ENCODE measurements at regions of chr5 and their contacts with region 1.

Region 1: GRCh38 chr5:135376961-135377624 is 21.9 kb downstream of the MACROH2A1 start:
- DNase-seq: no peak
- H3K4me3 ChIP-seq: no peak overlapping the region
- H3K27ac ChIP-seq: no peak overlapping the region
- H3K4me1 ChIP-seq: peaks cover 8 to 63% (median 25%) of the 10 kb centered on the region in 4 donors
- H3K27me3 ChIP-seq: no peaks in the 10 kb centered on the region
- CTCF ChIP-seq: no peak
- EP300 ChIP-seq: no peak
- POLR2A ChIP-seq: no peak

Region 2: DNA sequence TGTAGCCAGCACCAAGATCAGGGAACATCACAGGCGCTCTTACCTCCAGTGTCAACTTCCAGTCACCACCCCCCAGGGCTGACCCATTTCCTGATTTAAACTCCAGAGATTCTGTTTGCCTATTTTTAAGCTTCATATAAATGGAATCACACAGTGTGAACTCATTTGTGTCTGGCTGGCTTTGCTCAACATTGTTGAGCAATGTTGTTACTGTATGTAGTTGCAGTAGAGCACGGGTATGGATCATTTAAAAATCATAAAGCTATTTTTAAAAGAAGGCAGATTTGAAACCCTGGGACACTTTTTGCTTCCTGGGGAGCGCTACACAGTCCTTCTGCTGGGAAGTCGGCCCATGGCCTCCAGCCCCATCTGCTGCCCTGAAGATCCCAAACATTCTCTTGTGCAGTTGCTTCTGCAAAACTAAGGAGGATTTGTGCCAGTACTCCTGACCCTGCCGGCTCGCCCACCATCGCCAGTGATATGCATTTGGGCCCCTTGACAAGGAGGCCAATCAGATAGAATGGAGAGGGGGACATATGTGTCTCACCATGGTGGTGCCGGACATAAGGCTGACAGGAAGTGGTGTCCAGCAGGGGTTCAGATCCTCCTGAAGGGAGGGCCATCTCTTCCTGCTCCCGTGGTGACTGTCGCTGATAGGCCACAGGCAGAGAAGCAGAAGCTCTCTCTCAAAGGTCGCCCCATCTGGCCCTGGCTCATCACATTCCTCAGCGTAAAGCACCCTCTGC is 56.8 kb after region 1 on chr5:
- in situ Hi-C with region 1: no loop called
- intact Hi-C with region 1: no loop called
- DNase-seq: no peak
- H3K4me3 ChIP-seq: no peak overlapping the region
- H3K27ac ChIP-seq: peak overlapping the region in 1 of 4 donors; percentile 17
- H3K4me1 ChIP-seq: peaks cover 0 to 18% (median 3%) of the 10 kb centered on the region in 4 donors
- H3K27me3 ChIP-seq: peaks cover 3% of the 10 kb centered on the region
- CTCF ChIP-seq: no peak
- EP300 ChIP-seq: no peak
- POLR2A ChIP-seq: no peak

Region 3: GRCh38 chr5:136132557-136133221 is 755.6 kb after region 1 on chr5 and contains the start of gene SMAD5:
- in situ Hi-C with region 1: no loop called
- intact Hi-C with region 1: loop called (anchors 5 kb)
- DNase-seq: peak; percentile 96
- H3K4me3 ChIP-seq: peak within 1 kb of the TSS; percentile 70 to 96 (median 76)
- H3K27ac ChIP-seq: peak within 1 kb of the TSS; percentile 98 to 100 (median 98)
- H3K4me1 ChIP-seq: peaks cover 8 to 40% (median 26%) of the 10 kb centered on the region in 4 donors
- H3K27me3 ChIP-seq: no peaks in the 10 kb centered on the region
- CTCF ChIP-seq: no peak
- EP300 ChIP-seq: no peak
- POLR2A ChIP-seq: peak; percentile 81
- total RNA-seq, gene SMAD5: 14.2 to 272 (median 32.7) TPM

Measured in transverse colon (tissue), 4 donors.